ENCODE measurements at regions of chr11 and their contacts with region 1.

Region 1: GRCh38 chr11:76107971-76108370 is 98.3 kb downstream of the WNT11 start:
- DNase-seq: no peak
- H3K4me3 ChIP-seq: no peak overlapping the region
- H3K27ac ChIP-seq: no peak overlapping the region
- H3K4me1 ChIP-seq: no peaks in the 10 kb centered on the region
- H3K27me3 ChIP-seq: no peaks in the 10 kb centered on the region
- CTCF ChIP-seq: no peak
- POLR2A ChIP-seq: no peak

Region 2: DNA sequence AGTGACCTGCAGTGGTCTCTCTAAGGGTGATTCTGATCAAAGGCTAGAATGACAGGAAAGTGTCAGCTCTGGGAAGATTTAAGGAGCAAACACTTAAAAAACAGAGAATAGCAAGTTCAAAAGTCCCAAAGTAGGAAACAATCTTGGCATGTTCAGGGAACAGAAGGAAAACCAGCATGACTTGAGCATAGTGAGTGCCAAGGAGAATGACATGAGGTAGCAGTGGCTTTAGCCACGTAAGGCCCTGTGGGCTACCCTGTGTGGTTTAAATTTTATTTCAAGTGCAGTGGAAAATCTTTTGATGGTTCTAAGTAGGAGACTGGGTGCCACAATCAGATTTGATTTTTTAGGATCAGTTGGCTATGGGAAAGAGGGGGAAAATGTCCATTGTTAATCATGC is 51.1 kb before region 1 on chr11:
- intact Hi-C with region 1: loop called (anchors 2 kb)
- DNase-seq: no peak
- H3K4me3 ChIP-seq: no peak overlapping the region
- H3K27ac ChIP-seq: no peak overlapping the region
- H3K4me1 ChIP-seq: no peaks in the 10 kb centered on the region
- H3K27me3 ChIP-seq: no peaks in the 10 kb centered on the region
- CTCF ChIP-seq: no peak
- POLR2A ChIP-seq: no peak